ENCODE measurements at regions of chr2 and their contacts with region 1.

Region 1: GRCh38 chr2:157628477-157629415 is at the start of gene ACVR1C:
- DNase-seq: peak; percentile 32 to 89 (median 62)
- ATAC-seq: peak; percentile 81
- H3K4me3 ChIP-seq: peak within 1 kb of the TSS; percentile 65 to 81
- H3K4me3 Mint-ChIP-seq: peak within 1 kb of the TSS; percentile 96
- H3K27ac ChIP-seq: peak within 1 kb of the TSS in 1 of 2 experiments; percentile 42
- H3K27ac Mint-ChIP-seq: peak within 1 kb of the TSS; percentile 76
- H3K4me1 ChIP-seq: peaks cover 29% of the 10 kb centered on the region
- H3K4me1 Mint-ChIP-seq: peaks cover 37% of the 10 kb centered on the region
- H3K27me3 ChIP-seq: no peaks in the 10 kb centered on the region
- H3K27me3 Mint-ChIP-seq: no peaks in the 10 kb centered on the region
- CTCF ChIP-seq: peak; percentile 26
- total RNA-seq, gene ACVR1C: 2.3 to 2.4 TPM

Region 2: DNA sequence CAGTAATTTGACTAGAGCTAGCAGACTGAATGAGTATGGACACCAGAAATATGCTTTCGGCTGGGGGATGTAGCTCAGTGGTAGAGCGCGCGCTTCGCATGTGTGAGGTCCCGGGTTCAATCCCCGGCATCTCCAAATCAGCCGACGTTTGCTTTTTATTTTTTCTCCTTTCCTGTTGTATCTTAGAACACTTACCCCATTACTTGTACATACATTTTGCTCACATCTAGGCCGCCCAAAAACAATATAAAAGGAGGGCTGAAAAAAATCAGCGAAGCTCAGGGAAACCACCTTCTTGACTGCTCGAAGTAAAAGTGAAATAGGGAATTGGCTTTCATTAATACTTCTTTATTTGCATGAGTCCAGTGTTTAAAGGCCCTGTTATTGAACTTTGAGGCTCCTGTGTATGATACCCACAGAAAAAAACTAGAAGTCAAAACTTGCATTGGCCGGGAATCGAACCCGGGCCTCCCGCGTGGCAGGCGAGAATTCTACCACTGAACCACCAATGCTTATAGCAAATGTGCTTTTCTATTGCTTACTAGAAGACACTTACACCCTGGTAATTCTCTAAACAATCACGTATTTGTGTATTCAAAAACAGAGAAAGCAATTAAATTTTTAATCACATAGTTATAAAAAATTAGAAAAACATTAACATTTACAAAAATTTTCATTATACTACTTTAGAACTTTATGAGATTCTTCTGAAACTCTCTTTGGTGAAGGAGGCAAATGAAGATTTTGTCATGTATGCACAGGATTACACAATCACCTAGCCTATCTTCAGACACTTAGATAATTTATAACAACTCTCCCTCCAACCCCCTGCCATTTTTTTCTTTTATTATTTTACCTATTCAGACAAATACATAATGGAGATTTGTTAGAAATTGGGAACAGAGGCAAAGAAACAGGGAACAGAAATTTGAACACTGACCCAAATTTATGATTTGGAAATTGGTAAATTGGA is 1227.8 kb before region 1 on chr2:
- CTCF ChIA-PET with region 1: no interaction called
- POLR2A ChIA-PET with region 1: no interaction called
- intact Hi-C with region 1: loop called (anchors 5 kb)
- DNase-seq: peak; percentile 62 to 92 (median 81)
- ATAC-seq: peak; percentile 79
- H3K4me3 ChIP-seq: peak overlapping the region; percentile 74 to 85
- H3K4me3 Mint-ChIP-seq: peak overlapping the region; percentile 88
- H3K27ac ChIP-seq: peak overlapping the region; percentile 80 to 93
- H3K27ac Mint-ChIP-seq: peak overlapping the region; percentile 95
- H3K4me1 ChIP-seq: peaks cover 4% of the 10 kb centered on the region
- H3K4me1 Mint-ChIP-seq: peaks cover 28% of the 10 kb centered on the region
- H3K27me3 ChIP-seq: no peaks in the 10 kb centered on the region
- H3K27me3 Mint-ChIP-seq: no peaks in the 10 kb centered on the region
- CTCF ChIP-seq: no peak

Region 3: GRCh38 chr2:157876066-157876787 is 247.5 kb after region 1 on chr2 and contains the start of gene ACVR1:
- CTCF ChIA-PET with region 1: interaction called, 3 read pairs
- POLR2A ChIA-PET with region 1: interaction called, 3 read pairs
- intact Hi-C with region 1: loop called (anchors 5 kb)
- DNase-seq: peak; percentile 37 to 92 (median 78)
- ATAC-seq: peak; percentile 72
- H3K4me3 ChIP-seq: peak within 1 kb of the TSS; percentile 53 to 74
- H3K4me3 Mint-ChIP-seq: peak within 1 kb of the TSS; percentile 94
- H3K27ac ChIP-seq: peak within 1 kb of the TSS; percentile 1 to 29
- H3K27ac Mint-ChIP-seq: peak within 1 kb of the TSS; percentile 90
- H3K4me1 ChIP-seq: peaks cover 10% of the 10 kb centered on the region
- H3K4me1 Mint-ChIP-seq: peaks cover 48% of the 10 kb centered on the region
- H3K27me3 ChIP-seq: no peaks in the 10 kb centered on the region
- H3K27me3 Mint-ChIP-seq: no peaks in the 10 kb centered on the region
- CTCF ChIP-seq: peak; percentile 27
- total RNA-seq, gene ACVR1: 7.0 to 8.3 TPM

Region 4: DNA sequence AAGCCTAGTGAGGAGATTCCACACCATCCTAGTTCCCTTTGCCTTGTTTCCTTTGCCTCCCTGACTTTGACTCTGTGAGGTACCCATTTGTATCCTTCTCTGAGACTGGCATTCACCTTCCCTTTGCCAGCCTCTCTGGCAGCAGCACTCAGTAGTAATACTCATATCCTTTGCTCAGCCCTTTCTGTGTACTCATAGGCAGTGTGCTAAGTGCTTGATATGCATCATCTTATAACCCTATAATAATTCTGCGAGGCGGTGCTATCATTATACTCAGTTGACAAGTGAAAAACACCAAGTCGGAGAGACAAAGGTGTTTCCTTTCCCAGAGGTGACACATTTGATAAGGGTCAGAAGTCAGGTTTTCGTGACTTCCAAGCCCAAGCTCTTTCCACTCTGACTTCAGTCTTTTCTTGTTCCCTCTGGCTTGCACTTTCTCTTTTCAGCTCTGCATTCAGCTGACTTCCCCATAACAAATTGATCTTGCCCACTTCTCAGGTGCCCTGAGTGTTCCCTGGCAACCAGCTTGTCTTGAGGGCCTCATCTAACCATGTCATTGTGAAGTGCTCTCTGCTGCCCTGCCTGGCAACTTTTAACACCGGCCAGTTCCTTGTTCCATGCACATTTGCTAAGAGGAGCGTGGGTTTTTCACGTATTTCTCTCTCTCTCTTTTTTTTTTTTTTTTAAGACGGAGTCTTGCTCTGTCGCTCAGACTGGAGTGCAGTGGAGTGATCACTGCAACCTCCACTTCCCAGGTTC is 378.4 kb after region 1 on chr2:
- CTCF ChIA-PET with region 1: interaction called, 5 read pairs
- POLR2A ChIA-PET with region 1: no interaction called
- intact Hi-C with region 1: loop called in 1 of 2 experiments (anchors 1 kb)
- DNase-seq: peak in 1 of 9 experiments; percentile 24
- ATAC-seq: peak; percentile 40
- H3K4me3 ChIP-seq: no peak overlapping the region
- H3K4me3 Mint-ChIP-seq: no peak overlapping the region
- H3K27ac ChIP-seq: no peak overlapping the region
- H3K27ac Mint-ChIP-seq: no peak overlapping the region
- H3K4me1 ChIP-seq: no peaks in the 10 kb centered on the region
- H3K4me1 Mint-ChIP-seq: peaks cover 4% of the 10 kb centered on the region
- H3K27me3 ChIP-seq: no peaks in the 10 kb centered on the region
- H3K27me3 Mint-ChIP-seq: peaks cover 11% of the 10 kb centered on the region
- CTCF ChIP-seq: no peak

Region 5: GRCh38 chr2:158456309-158457066 is 827.7 kb after region 1 on chr2 and contains the starts of genes CCDC148 and PKP4:
- CTCF ChIA-PET with region 1: no interaction called
- POLR2A ChIA-PET with region 1: no interaction called
- intact Hi-C with region 1: loop called (anchors 5 to 10 kb)
- DNase-seq: peak; percentile 74 to 97 (median 86)
- ATAC-seq: peak; percentile 91
- H3K4me3 ChIP-seq: peak within 1 kb of the TSS; percentile 69 to 81
- H3K4me3 Mint-ChIP-seq: peak within 1 kb of the TSS; percentile 96
- H3K27ac ChIP-seq: peak within 1 kb of the TSS; percentile 23 to 49
- H3K27ac Mint-ChIP-seq: peak within 1 kb of the TSS; percentile 76
- H3K4me1 ChIP-seq: peaks cover 12% of the 10 kb centered on the region
- H3K4me1 Mint-ChIP-seq: peaks cover 16% of the 10 kb centered on the region
- H3K27me3 ChIP-seq: no peaks in the 10 kb centered on the region
- H3K27me3 Mint-ChIP-seq: peaks cover 13% of the 10 kb centered on the region
- CTCF ChIP-seq: no peak
- total RNA-seq, gene CCDC148: not detected
- total RNA-seq, gene PKP4: 5.7 to 8.1 TPM